ENCODE measurements at regions of chr10 and their contacts with region 1.

Region 1: DNA sequence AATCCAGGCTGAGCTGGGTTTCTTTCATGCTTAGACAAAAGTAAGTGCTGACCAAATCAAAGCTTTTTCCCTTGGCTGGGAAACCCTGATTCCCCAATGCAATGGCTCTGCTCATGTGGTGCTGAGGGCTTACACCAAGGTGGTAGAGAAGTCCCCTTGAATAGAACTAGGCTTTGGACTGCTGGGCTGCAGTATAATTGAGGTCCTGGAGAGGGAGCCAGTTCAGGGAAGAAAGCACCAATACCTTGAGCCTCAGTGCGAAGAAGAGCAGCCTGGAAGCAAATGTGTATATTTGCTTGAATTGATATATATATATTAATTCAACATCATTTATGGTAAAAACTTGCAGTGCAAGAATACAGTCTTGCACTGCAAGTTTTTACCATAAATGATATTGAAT is 391.1 kb downstream of the RPS24 start:
- DNase-seq: peak; percentile 92
- ATAC-seq: peak; percentile 98
- H3K4me3 ChIP-seq: no peak overlapping the region
- H3K27ac ChIP-seq: no peak overlapping the region
- H3K4me1 ChIP-seq: no peaks in the 10 kb centered on the region
- H3K27me3 ChIP-seq: peaks cover 35% of the 10 kb centered on the region
- CTCF ChIP-seq: peak; percentile 99

Region 2: GRCh38 chr10:78211561-78212051 is 213.1 kb before region 1 on chr10:
- CTCF ChIA-PET with region 1: no interaction called
- POLR2A ChIA-PET with region 1: no interaction called
- intact Hi-C with region 1: loop called (anchors 2 kb)
- DNase-seq: peak; percentile 92
- ATAC-seq: peak; percentile 66
- H3K4me3 ChIP-seq: no peak overlapping the region
- H3K27ac ChIP-seq: no peak overlapping the region
- H3K4me1 ChIP-seq: no peaks in the 10 kb centered on the region
- H3K27me3 ChIP-seq: peaks cover 69% of the 10 kb centered on the region
- CTCF ChIP-seq: peak; percentile 100

Region 3: DNA sequence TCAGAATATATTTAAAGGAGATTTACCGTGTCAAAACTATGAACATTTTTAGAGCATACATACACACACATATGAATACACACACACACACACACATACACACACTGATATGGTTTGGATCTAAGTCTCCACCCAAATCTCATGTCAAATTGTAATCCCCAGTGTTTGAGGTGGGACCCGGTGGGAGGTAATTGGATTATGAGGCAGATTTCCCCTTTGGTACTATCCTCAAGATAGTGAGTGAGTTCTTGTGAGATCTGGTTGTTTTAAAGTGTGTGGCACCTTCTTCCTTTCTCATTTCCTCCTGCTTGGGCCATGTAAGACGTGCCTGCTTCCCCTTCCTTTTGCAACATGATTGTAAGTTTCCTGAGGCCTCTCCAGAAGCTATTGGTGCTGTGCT is 129.1 kb after region 1 on chr10:
- CTCF ChIA-PET with region 1: no interaction called
- POLR2A ChIA-PET with region 1: interaction called, 13 read pairs
- intact Hi-C with region 1: no loop called
- DNase-seq: no peak
- ATAC-seq: no peak
- H3K4me3 ChIP-seq: no peak overlapping the region
- H3K27ac ChIP-seq: no peak overlapping the region
- H3K4me1 ChIP-seq: peaks cover 26% of the 10 kb centered on the region
- H3K27me3 ChIP-seq: peaks cover 8% of the 10 kb centered on the region; the same call in 1 of the 2 replicates
- CTCF ChIP-seq: no peak

Region 4: GRCh38 chr10:78605800-78606350 is 181.2 kb after region 1 on chr10:
- CTCF ChIA-PET with region 1: no interaction called
- POLR2A ChIA-PET with region 1: no interaction called
- intact Hi-C with region 1: loop called (anchors 1 kb)
- DNase-seq: peak; percentile 99
- ATAC-seq: peak; percentile 100
- H3K4me3 ChIP-seq: no peak overlapping the region
- H3K27ac ChIP-seq: no peak overlapping the region
- H3K4me1 ChIP-seq: no peaks in the 10 kb centered on the region
- H3K27me3 ChIP-seq: 0 out of 2 replicates have a peak, but pooled peaks cover 5% of the 10 kb centered on the region
- CTCF ChIP-seq: peak; percentile 70

Measured in PC-3 (cell line).